Dorsolateral prefrontal cortex (tissue), 120 donors: ENCODE measurements at regions of chr3 and their contacts with region 1.

Region 1: GRCh38 chr3:168213920-168214319 is 118.2 kb upstream of the GOLIM4 start:
- DNase-seq: no peak
- H3K4me3 ChIP-seq: no peak overlapping the region
- H3K27ac ChIP-seq: no peak overlapping the region
- H3K27me3 ChIP-seq: no peaks in the 10 kb centered on the region
- CTCF ChIP-seq: no peak

Region 2: GRCh38 chr3:168141405-168141998 is 72.4 kb before region 1 on chr3:
- intact Hi-C with region 1: no loop called
- DNase-seq: no peak
- H3K4me3 ChIP-seq: no peak overlapping the region
- H3K27ac ChIP-seq: no peak overlapping the region
- H3K27me3 ChIP-seq: no peaks in the 10 kb centered on the region
- CTCF ChIP-seq: no peak

Region 3: DNA sequence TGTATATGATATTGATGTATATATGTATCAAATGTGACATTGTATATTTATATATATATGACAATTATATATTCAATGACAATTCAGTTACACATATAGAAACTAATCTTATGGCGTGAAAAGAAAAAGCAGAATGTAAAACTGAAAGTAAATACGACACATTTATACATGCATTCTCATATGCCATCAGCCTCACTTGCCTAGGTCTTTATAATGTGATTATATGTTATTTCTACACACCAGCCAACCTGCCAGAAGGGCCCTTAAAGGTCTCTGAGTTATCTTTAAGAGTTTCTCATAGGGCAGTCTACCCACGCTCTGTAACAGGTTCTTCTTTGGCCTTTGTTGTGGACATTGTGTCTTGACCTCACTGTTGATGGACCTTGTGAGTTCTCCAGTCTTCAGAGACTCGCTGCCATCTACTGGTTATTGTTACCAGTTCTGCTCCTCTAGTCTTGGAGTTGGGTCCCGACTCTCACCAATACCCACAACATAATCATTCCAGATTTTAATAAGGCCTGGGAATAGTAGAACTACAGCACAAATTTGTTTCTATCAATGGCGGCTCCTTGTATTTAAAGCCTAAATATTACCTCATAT is 253.3 kb after region 1 on chr3:
- intact Hi-C with region 1: loop called (anchors 2 to 10 kb)
- DNase-seq: peak in 1 of 10 donors; percentile 35
- H3K4me3 ChIP-seq: peak overlapping the region in 8 of 59 donors; percentile 2 to 34 (median 21)
- H3K27ac ChIP-seq: no peak overlapping the region
- H3K27me3 ChIP-seq: no peaks in the 10 kb centered on the region
- CTCF ChIP-seq: peak in 50 of 56 donors; percentile 16 to 69 (median 45)

Region 4: GRCh38 chr3:168620826-168621225 is 406.9 kb after region 1 on chr3:
- intact Hi-C with region 1: loop called in 1 of 2 experiments (anchors 10 kb)
- DNase-seq: peak in 6 of 10 donors; percentile 31 to 74 (median 58)
- H3K4me3 ChIP-seq: no peak overlapping the region
- H3K27ac ChIP-seq: no peak overlapping the region
- H3K27me3 ChIP-seq: peaks cover 0 to 10% (median 0%) of the 10 kb centered on the region in 45 donors
- CTCF ChIP-seq: peak in 55 of 56 donors; percentile 7 to 77 (median 61)

Region 5: GRCh38 chr3:168847291-168847883 is 633.5 kb after region 1 on chr3:
- intact Hi-C with region 1: loop called (anchors 2 to 5 kb)
- DNase-seq: peak in 1 of 10 donors; percentile 20
- H3K4me3 ChIP-seq: peak overlapping the region in 22 of 59 donors; percentile 1 to 42 (median 20)
- H3K27ac ChIP-seq: no peak overlapping the region
- H3K27me3 ChIP-seq: peaks cover 0 to 16% (median 0%) of the 10 kb centered on the region in 45 donors
- CTCF ChIP-seq: peak; percentile 52 to 88 (median 72)